HCT116 (cell line): ENCODE measurements at regions of chr14 and their contacts with region 1.

Region 1: DNA sequence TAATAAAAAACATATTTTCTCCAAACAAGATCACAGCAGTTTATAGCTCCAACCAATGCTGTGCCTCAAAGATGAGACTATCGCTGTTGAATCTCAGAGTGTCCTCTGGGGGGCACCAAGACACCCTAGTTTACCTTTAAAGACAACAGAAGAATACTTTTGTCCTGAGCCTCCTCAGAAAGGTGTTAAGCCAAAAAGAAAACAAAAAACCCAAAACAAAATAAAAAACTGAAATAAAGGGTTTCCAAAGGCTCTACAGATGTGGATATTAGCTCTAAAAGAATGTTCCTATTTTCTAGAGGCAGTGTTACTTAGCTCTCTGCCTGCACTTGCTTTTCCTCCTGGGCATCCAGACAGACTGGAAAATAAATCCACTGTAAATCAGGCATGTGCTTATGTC is 86.9 kb upstream of the TTC7B start:
- DNase-seq: peak; percentile 45
- ATAC-seq: peak; percentile 98
- H3K4me3 ChIP-seq: no peak overlapping the region
- H3K27ac ChIP-seq: no peak overlapping the region
- H3K4me1 ChIP-seq: peaks cover 0 to 4% of the 10 kb centered on the region in 2 experiments; a peak in 2 of 4 replicates
- H3K27me3 ChIP-seq: no peaks in the 10 kb centered on the region
- CTCF ChIP-seq: peak; percentile 77 to 86 (median 80)
- POLR2A ChIP-seq: no peak
- RAD21 ChIP-seq: peak; percentile 90

Region 2: GRCh38 chr14:91138511-91139359 is 235.6 kb after region 1 on chr14:
- CTCF ChIA-PET with region 1: interaction called, 34 read pairs
- POLR2A ChIA-PET with region 1: no interaction called
- RAD21 ChIA-PET with region 1: interaction called in 1 of 2 experiments, 8 read pairs
- intact Hi-C with region 1: loop called (anchors 1 kb)
- DNase-seq: no peak
- ATAC-seq: peak; percentile 46
- H3K4me3 ChIP-seq: no peak overlapping the region
- H3K27ac ChIP-seq: no peak overlapping the region
- H3K4me1 ChIP-seq: peaks cover 4 to 30% of the 10 kb centered on the region in 2 experiments; a peak in 3 of 4 replicates
- H3K27me3 ChIP-seq: no peaks in the 10 kb centered on the region
- CTCF ChIP-seq: peak; percentile 27 to 70 (median 69); a peak in 4 of 6 replicates
- POLR2A ChIP-seq: no peak
- RAD21 ChIP-seq: peak; percentile 44; the same call in 1 of the 2 replicates

Region 3: DNA sequence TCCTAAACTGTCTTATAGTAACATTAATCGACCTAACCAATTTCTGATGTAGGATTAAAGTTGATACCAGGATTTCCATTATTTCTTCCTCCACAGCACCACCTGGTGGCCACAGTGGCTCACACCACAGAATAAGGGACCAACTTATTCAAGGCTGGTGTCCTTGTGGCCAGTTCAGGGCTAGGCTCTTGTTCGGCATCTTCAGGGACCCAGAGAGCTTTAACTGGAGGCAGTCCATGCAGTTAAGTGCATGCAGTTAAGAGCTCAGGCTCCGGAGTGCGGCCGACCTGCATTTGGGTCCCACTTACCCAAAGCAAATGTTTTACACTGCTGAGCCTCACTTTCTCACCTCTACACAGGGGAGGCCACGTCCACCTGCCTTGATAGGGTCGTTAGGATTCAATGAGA is 383.4 kb after region 1 on chr14:
- CTCF ChIA-PET with region 1: interaction called, 7 read pairs
- POLR2A ChIA-PET with region 1: no interaction called
- RAD21 ChIA-PET with region 1: no interaction called
- intact Hi-C with region 1: loop called (anchors 1 kb)
- DNase-seq: peak; percentile 49
- ATAC-seq: peak; percentile 94
- H3K4me3 ChIP-seq: no peak overlapping the region
- H3K27ac ChIP-seq: no peak overlapping the region
- H3K4me1 ChIP-seq: no peaks in the 10 kb centered on the region; a peak in 1 of 4 replicates
- H3K27me3 ChIP-seq: no peaks in the 10 kb centered on the region
- CTCF ChIP-seq: peak; percentile 79 to 95 (median 88)
- POLR2A ChIP-seq: no peak
- RAD21 ChIP-seq: peak; percentile 79